A673 (cell line): ENCODE measurements at regions of chr10 and their contacts with region 1.

Region 1: DNA sequence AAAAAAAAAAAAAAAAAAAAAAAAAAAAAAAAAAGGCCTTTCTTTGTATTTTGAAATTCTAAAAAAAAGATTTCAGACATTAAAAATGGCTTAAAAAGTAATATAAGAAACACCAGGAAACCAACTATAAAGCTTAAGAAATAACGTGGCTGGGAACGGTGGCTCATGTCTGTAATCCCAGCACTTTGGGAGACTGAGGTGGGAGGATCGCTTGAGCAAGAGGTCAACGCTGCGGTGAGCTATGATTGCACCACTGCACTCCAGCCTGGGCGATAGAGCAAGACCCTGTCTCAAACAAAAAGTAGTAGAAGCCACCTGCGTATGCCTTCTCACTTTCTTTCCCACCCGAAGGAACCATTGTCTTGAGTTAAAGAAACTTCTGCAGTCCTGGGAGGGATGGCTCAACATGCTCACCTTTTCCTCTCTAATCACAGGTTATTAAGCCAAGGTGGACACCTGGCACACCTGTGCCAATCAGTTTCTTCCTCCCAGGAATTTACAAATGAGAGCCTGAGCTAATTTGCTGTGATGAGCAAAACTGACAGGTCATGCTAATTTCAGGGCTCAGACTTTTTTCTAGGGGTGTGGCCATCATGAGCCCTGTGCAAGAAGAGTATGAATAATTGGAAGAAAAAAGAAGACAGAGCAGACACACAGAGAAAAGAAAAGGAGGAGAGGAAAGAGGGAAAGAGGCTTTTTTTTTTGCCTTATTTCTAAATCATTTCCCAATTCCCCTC is 72.0 kb upstream of the PARD3 start:
- DNase-seq: no peak
- H3K4me3 ChIP-seq: no peak overlapping the region
- H3K27ac ChIP-seq: no peak overlapping the region
- H3K4me1 ChIP-seq: no peaks in the 10 kb centered on the region
- H3K27me3 ChIP-seq: no peaks in the 10 kb centered on the region
- CTCF ChIP-seq: no peak

Region 2: GRCh38 chr10:35012781-35013180 is 125.7 kb after region 1 on chr10:
- CTCF ChIA-PET with region 1: interaction called, 11 read pairs
- POLR2A ChIA-PET with region 1: no interaction called
- intact Hi-C with region 1: no loop called
- DNase-seq: no peak
- H3K4me3 ChIP-seq: no peak overlapping the region
- H3K27ac ChIP-seq: no peak overlapping the region
- H3K4me1 ChIP-seq: peaks cover 9% of the 10 kb centered on the region
- H3K27me3 ChIP-seq: no peaks in the 10 kb centered on the region
- CTCF ChIP-seq: no peak

Region 3: DNA sequence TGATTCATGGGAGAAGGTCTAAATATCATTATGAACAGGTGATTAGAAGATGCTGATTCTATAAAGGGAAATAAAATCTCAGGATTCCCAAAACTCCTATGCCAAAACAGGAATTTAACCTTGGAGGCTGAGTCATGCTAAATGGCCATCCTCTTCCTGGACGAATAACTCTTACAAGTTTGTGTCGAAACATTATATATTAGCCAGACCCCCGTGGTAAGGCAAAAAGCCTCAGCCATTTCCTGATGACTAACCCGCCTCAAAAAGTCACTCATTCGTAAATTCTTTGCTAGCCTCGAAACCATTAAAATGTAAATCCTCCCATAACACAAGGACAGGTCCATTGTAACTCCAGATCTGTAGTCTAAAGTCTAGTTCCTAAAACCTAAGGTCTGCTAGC is 171.1 kb after region 1 on chr10:
- CTCF ChIA-PET with region 1: no interaction called
- POLR2A ChIA-PET with region 1: no interaction called
- intact Hi-C with region 1: no loop called
- DNase-seq: peak; percentile 84
- H3K4me3 ChIP-seq: no peak overlapping the region
- H3K27ac ChIP-seq: peak overlapping the region; percentile 7
- H3K4me1 ChIP-seq: peaks cover 17% of the 10 kb centered on the region
- H3K27me3 ChIP-seq: no peaks in the 10 kb centered on the region
- CTCF ChIP-seq: no peak